ENCODE measurements at regions of chr19 and their contacts with region 1.

Region 1: DNA sequence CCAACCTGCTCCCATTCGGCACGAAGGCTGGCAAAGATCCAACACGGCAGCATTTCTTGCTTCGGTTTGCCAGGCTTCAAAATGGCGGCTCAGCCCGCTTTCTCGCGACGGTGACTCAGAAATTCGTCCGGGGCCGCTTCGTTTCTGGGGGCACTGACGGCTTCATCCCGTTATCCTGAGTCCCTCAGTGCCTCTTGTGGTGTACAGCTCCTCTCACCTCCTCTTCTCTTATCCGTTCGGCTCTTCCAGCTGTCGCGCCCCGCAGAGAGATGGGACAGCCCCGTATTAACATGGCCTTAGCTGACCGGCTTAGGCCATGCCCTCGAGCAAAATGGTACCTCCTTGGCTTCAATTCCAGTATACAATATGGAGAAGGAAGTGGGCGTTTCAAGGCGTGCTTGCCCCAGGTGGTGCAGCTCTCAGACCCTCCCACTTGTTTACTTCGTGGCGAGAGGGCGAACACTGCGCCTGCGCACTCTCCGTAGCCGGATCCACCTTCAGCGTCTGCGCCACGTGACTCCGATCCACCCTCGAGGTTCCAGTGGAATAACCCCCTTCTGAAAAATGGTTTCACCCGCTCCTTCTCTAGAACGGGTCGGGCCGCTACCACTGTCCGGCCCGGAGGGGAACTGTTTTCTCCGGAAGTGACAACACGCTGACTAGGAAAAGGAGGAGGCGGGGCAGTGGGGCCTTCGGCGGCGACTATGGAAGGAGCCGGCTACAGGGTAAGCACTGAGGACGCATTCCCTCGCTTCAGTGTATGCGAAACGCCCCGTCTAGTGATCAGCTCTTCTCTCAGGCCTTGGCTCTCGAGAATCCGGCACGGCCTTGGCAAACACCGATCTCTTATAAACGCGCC is at the starts of genes AKT1S1 and TBC1D17:
- DNase-seq: peak; percentile 99
- H3K4me3 Mint-ChIP-seq: no peak within 1 kb of the TSS
- H3K27ac Mint-ChIP-seq: no peak within 1 kb of the TSS
- H3K4me1 Mint-ChIP-seq: peaks cover 26% of the 10 kb centered on the region
- H3K27me3 Mint-ChIP-seq: no peaks in the 10 kb centered on the region
- total RNA-seq, gene AKT1S1: 19.6 TPM
- total RNA-seq, gene TBC1D17: 32.5 to 34.7 TPM

Region 2: DNA sequence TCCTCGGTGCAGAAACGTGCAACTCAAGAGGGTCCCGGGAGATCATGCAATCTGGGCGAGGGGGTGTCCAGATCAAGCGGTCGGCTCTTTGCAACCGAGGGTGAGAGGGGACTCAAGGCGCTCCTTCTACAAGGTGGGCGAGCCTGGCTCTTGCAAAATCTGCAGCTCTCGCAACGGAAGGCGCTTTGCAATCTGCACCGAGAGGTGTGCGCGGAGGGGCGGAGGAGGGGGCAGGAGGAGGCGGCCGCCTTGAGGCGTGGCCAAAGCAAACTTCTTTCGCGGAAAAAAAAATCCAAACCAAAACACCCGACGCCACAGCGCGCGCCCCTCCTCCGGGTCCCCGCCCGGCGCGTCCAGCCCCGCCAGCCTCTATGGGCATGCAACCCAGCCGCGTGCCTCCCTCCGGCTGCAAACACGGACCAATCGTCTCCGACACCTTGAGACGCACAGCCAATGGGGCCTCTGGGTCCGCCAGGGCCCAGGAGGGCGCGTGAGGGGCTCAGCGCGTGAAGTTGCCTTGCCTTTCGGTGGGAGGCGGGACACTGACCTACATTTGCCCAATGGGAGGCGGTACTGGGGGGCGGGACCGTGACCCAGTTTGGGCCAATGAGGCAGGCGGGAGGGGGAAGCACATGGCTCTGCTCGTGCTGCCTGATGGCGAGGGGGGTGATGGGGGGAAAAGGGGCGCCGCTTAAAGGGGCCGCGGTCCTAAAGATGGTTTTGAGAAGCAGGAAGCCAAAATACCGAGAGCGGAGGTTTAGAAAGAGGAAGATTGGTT is 1239.9 kb before region 1 on chr19 and contains the start of gene DBP:
- CTCF ChIA-PET with region 1: no interaction called
- POLR2A ChIA-PET with region 1: no interaction called
- intact Hi-C with region 1: loop called (anchors 2 kb)
- DNase-seq: peak; percentile 99
- H3K4me3 Mint-ChIP-seq: peak within 1 kb of the TSS; percentile 87
- H3K27ac Mint-ChIP-seq: peak within 1 kb of the TSS; percentile 98
- H3K4me1 Mint-ChIP-seq: peaks cover 48% of the 10 kb centered on the region
- H3K27me3 Mint-ChIP-seq: no peaks in the 10 kb centered on the region
- total RNA-seq, gene DBP: 8.3 to 10.4 TPM

Region 3: GRCh38 chr19:49766007-49766937 is 111.0 kb before region 1 on chr19:
- CTCF ChIA-PET with region 1: no interaction called
- POLR2A ChIA-PET with region 1: no interaction called
- intact Hi-C with region 1: loop called (anchors 1 kb)
- DNase-seq: peak; percentile 100
- H3K4me3 Mint-ChIP-seq: peak overlapping the region; percentile 96
- H3K27ac Mint-ChIP-seq: peak overlapping the region; percentile 95
- H3K4me1 Mint-ChIP-seq: peaks cover 33% of the 10 kb centered on the region
- H3K27me3 Mint-ChIP-seq: no peaks in the 10 kb centered on the region

Region 4: DNA sequence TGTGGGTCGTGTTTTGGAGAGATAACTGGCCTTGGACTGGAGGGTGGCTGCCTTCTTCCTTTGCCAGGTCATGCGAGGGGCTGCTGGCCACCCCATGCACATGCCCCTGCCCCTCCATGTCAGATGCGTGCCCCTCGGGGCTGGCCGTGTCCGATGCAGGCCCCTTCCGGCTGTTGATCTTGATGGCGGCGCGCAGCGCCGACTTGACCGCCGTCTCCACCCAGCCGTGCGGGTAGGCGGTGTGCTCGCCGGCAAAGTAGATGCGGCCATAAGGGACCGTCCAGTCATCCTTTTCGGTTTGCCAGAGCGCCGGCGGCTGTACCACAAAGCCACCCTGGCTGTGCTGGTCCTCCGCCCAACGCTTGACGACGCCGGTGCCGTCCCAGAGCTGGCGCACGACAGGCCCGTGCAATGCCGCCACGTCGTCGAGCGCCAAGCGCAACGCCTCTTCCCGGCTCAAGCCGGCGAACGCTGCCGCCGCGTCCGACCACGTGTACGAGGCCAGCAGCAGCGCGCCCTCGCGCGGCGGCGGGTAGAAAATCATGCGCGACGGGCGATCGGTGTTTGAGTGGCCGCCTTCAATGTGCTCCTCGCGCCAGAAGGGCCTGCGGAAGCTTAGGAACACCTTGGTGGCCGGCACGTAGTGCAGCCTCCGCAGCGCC is 12.6 kb after region 1 on chr19:
- CTCF ChIA-PET with region 1: interaction called, 7 read pairs
- POLR2A ChIA-PET with region 1: interaction called, 8 read pairs
- intact Hi-C with region 1: loop called (anchors 1 kb)
- DNase-seq: peak; percentile 84
- H3K4me3 Mint-ChIP-seq: peak overlapping the region; percentile 69
- H3K27ac Mint-ChIP-seq: peak overlapping the region; percentile 76
- H3K4me1 Mint-ChIP-seq: peaks cover 46% of the 10 kb centered on the region
- H3K27me3 Mint-ChIP-seq: no peaks in the 10 kb centered on the region

Region 5: GRCh38 chr19:49929611-49930482 is 52.6 kb after region 1 on chr19:
- CTCF ChIA-PET with region 1: no interaction called
- POLR2A ChIA-PET with region 1: interaction called, 21 read pairs
- intact Hi-C with region 1: loop called (anchors 1 kb)
- DNase-seq: peak; percentile 96
- H3K4me3 Mint-ChIP-seq: peak overlapping the region; percentile 98
- H3K27ac Mint-ChIP-seq: peak overlapping the region; percentile 98
- H3K4me1 Mint-ChIP-seq: peaks cover 66% of the 10 kb centered on the region
- H3K27me3 Mint-ChIP-seq: peaks cover 5% of the 10 kb centered on the region